A673 (cell line): ENCODE measurements at regions of chr3 and their contacts with region 1.

Region 1: DNA sequence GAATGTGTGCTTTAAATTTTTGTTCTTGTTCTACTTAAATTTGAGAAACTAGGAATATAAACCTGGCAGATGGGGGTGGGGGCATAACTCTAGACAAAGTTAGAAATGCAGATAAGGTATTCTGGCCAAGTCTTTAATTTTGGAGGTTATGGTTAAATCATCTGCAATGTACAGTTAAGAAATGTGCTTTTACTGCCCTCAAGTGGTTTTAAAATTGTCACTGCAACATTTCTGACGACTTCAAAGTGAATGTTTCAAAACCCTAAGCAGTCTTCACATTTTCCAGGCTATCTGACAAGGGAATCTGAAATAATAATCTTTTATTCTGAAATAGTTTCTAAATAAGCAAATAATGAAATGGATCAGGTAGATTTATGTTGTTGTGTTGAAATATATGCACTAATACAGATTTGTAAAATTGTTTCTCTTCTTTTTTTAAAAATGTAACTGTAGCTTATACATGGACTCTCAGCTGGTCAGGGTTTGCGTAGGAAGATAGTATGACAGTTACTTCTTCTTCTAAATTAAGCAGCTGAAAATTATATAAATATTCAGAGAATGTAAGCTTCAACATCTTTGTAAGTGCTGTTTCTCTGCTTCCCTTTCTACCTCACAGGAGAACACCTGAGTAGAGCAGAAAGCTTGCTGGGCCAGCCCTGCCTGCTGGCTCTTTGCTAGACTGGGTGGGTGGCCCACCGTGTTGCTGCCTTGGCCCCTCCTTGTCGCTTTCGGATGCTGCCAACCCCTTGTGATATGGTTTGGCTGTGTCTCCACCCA is 45.0 kb downstream of the SUCNR1 start:
- DNase-seq: peak; percentile 73
- H3K4me3 ChIP-seq: no peak overlapping the region
- H3K27ac ChIP-seq: no peak overlapping the region
- H3K4me1 ChIP-seq: peaks cover 4% of the 10 kb centered on the region
- H3K27me3 ChIP-seq: no peaks in the 10 kb centered on the region
- CTCF ChIP-seq: peak; percentile 71

Region 2: DNA sequence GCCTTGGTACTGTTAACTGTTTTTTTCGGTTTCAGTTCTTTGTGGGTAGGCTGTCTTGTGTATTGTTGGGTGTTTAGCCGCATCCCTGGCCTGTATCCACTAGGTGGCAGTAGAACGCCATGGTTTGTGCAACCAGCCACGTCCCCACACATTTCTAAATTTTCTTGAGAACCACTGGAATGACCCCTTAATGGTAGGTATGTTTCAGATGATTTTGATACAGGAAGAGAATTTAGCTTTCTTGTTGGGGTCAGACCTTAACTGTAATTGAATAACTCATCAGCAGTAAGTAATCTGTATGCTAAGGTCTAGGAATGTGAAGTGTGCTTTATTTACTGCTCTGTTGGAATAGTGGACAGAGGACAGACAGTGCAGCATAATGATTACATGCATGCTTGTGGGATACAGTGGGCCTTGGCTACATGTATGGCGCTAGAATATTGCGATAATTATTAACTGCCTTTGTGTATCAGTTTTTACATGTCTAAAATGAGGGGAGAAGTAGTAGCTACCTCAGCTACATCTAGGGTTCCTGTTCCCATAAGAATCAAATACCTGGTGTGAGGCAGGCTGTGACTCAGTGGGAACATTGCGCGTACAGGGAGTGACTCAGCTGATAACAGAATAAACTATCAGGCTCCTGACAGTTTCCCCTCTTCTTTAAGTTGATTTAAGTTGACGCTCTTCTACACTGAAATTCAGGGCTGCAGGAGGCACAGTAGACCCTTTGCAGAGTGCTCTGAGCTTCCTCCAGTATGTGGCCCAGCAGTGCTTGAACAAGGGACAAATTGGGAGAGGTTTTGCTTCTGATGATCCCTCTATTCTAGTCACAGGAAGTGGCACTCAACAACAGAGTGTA is 690.4 kb before region 1 on chr3:
- CTCF ChIA-PET with region 1: no interaction called
- POLR2A ChIA-PET with region 1: no interaction called
- intact Hi-C with region 1: loop called (anchors 2 kb)
- DNase-seq: peak; percentile 84
- H3K4me3 ChIP-seq: no peak overlapping the region
- H3K27ac ChIP-seq: no peak overlapping the region
- H3K4me1 ChIP-seq: no peaks in the 10 kb centered on the region
- H3K27me3 ChIP-seq: no peaks in the 10 kb centered on the region
- CTCF ChIP-seq: peak; percentile 93

Region 3: GRCh38 chr3:151425627-151426335 is 492.7 kb before region 1 on chr3:
- CTCF ChIA-PET with region 1: no interaction called
- POLR2A ChIA-PET with region 1: no interaction called
- intact Hi-C with region 1: loop called (anchors 5 kb)
- DNase-seq: peak; percentile 90
- H3K4me3 ChIP-seq: no peak overlapping the region
- H3K27ac ChIP-seq: peak overlapping the region; percentile 35
- H3K4me1 ChIP-seq: peaks cover 20% of the 10 kb centered on the region
- H3K27me3 ChIP-seq: no peaks in the 10 kb centered on the region
- CTCF ChIP-seq: peak; percentile 80

Region 4: DNA sequence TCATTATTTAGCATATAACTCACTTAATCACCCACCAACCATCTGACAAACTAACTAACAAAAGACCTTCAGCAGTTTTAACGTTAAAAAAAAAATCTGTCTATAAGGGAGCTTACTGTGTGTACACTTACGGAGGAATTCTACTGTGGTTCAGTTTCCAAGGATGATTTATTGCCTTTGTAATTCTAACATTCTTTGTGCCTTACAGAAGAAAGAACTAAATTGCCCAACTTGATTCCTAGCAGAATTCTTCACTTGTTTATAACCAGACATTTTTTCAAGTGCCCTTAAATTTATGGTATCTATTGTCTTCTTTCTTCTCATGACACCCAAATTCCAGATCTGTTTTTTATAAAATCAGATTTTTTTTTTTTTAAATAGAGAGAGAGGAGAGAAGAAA is 337.9 kb before region 1 on chr3:
- CTCF ChIA-PET with region 1: no interaction called
- POLR2A ChIA-PET with region 1: no interaction called
- intact Hi-C with region 1: loop called (anchors 10 kb)
- DNase-seq: peak; percentile 94
- H3K4me3 ChIP-seq: peak overlapping the region; percentile 11
- H3K27ac ChIP-seq: peak overlapping the region; percentile 93
- H3K4me1 ChIP-seq: peaks cover 31% of the 10 kb centered on the region
- H3K27me3 ChIP-seq: no peaks in the 10 kb centered on the region
- CTCF ChIP-seq: no peak

Region 5: DNA sequence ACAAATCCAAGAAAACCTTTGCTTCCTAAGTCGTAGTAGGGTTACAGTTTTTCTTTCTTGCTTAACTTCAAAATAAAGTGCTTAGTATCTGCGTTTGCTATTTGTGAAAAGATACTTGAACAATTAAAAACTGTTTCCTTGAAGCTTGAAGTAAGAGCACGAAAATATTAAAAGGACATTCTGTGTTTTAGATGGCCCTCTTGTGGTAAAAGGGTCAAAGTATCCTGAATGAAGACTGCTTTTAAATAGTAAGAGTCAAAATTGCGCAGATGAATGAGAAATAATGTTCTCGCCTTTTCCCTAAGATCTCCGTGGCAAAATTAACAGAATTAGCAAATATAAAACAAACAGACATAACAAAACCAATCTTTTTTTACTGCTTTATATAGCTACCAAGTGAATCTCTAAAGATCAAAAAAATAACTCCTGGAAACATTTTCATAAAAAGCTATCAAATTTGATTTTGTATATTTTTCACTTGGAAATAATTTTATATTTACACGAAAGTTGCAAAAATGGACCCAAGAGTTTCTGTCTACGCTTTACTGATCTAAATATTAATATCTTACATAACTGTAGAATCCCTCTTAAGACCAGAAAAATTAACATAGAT is 525.7 kb after region 1 on chr3:
- CTCF ChIA-PET with region 1: no interaction called
- POLR2A ChIA-PET with region 1: no interaction called
- intact Hi-C with region 1: loop called (anchors 10 kb)
- DNase-seq: peak; percentile 72
- H3K4me3 ChIP-seq: no peak overlapping the region
- H3K27ac ChIP-seq: no peak overlapping the region
- H3K4me1 ChIP-seq: peaks cover 19% of the 10 kb centered on the region
- H3K27me3 ChIP-seq: no peaks in the 10 kb centered on the region
- CTCF ChIP-seq: peak; percentile 75